H1 (cell line): ENCODE measurements at regions of chr7 and their contacts with region 1.

Region 1: DNA sequence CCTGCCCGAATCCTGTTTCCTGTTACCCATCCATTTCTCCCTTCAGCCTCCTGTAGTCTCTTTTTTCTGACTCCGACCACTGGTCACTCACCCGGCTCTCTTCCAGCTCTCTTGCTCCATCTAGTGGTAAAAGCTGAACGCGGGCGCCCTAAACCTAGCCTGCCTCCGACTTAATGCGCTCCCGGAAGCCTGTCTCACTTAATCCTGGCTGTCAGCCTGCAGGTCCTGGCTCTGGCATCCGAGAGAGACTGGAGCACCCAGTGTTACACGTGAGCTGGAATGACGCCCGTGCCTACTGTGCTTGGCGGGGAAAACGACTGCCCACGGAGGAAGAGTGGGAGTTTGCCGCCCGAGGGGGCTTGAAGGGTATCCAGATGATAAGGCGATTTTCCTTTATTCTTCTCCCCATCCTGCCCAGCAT is 10.3 kb downstream of the SUMF2 start:
- DNase-seq: peak; percentile 66 to 94
- H3K4me3 ChIP-seq: no peak overlapping the region
- H3K27ac ChIP-seq: no peak overlapping the region
- H3K4me1 ChIP-seq: no peaks in the 10 kb centered on the region
- H3K27me3 ChIP-seq: no peaks in the 10 kb centered on the region
- CTCF ChIP-seq: peak; percentile 70 to 86 (median 81)
- EP300 ChIP-seq: no peak
- POLR2A ChIP-seq: no peak
- RAD21 ChIP-seq: peak; percentile 87 to 91

Region 2: GRCh38 chr7:55983537-55983936 is 90.8 kb before region 1 on chr7:
- CTCF ChIA-PET with region 1: no interaction called
- POLR2A ChIA-PET with region 1: no interaction called
- DNase-seq: no peak
- H3K4me3 ChIP-seq: no peak overlapping the region
- H3K27ac ChIP-seq: no peak overlapping the region
- H3K4me1 ChIP-seq: no peaks in the 10 kb centered on the region
- H3K27me3 ChIP-seq: no peaks in the 10 kb centered on the region
- CTCF ChIP-seq: no peak
- EP300 ChIP-seq: no peak
- POLR2A ChIP-seq: no peak
- RAD21 ChIP-seq: no peak

Region 3: DNA sequence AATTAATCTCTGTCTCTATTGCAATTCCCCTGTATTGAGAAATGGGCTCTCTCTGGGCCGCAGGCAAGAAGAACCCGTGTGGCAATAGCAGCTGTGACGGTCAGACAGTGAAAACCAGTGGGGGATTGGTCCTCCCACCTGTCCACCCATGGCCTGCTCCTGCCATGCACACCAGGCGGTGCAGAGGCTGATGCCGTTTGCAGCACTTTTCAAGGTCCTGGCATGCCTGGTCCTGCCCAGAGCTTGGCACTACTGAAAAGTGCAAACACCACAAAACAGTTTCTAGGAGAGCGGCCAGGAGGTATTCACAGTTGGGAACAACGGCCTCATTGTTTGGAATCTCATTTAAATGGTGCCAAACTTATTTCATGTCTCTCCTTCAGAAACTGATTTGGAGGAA is 64.7 kb before region 1 on chr7:
- CTCF ChIA-PET with region 1: interaction called, 28 read pairs
- POLR2A ChIA-PET with region 1: interaction called, 869 read pairs
- DNase-seq: no peak
- H3K4me3 ChIP-seq: no peak overlapping the region
- H3K27ac ChIP-seq: no peak overlapping the region
- H3K4me1 ChIP-seq: no peaks in the 10 kb centered on the region
- H3K27me3 ChIP-seq: no peaks in the 10 kb centered on the region; a peak in 1 of 7 replicates
- CTCF ChIP-seq: no peak
- EP300 ChIP-seq: no peak
- POLR2A ChIP-seq: peak in 1 of 2 experiments; percentile 26; a peak in 1 of 3 replicates
- RAD21 ChIP-seq: no peak

Region 4: DNA sequence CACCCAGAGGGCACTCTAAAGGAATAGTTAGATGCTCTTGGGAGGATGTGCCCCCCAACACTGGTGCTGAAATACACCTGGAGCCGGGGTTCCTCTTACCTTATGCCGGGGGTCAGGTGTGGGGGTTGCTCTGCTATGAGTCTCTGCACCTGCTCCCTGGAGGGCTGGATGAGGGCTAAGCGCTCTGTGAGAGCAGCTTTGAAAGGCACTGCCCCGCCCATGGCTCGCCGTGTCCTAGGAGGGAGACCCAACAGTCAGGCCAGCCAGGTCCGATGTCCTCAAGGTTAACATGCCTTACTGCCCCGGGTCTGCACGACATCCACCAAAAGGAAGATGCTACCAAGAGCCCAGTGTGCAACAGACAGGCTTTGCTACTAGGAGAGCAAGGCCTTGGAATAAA is 54.9 kb before region 1 on chr7:
- CTCF ChIA-PET with region 1: interaction called, 10 read pairs
- POLR2A ChIA-PET with region 1: interaction called, 869 read pairs
- DNase-seq: no peak
- H3K4me3 ChIP-seq: no peak overlapping the region
- H3K27ac ChIP-seq: no peak overlapping the region
- H3K4me1 ChIP-seq: no peaks in the 10 kb centered on the region
- H3K27me3 ChIP-seq: no peaks in the 10 kb centered on the region
- CTCF ChIP-seq: no peak
- EP300 ChIP-seq: no peak
- POLR2A ChIP-seq: no peak
- RAD21 ChIP-seq: no peak

Region 5: GRCh38 chr7:56051339-56052191 is 22.8 kb before region 1 on chr7 and contains the starts of genes CCT6A and PSPH:
- CTCF ChIA-PET with region 1: interaction called, 4 read pairs
- POLR2A ChIA-PET with region 1: interaction called, 14 read pairs
- DNase-seq: peak; percentile 95 to 96
- H3K4me3 ChIP-seq: peak within 1 kb of the TSS; percentile 74 to 100 (median 92)
- H3K27ac ChIP-seq: peak within 1 kb of the TSS; percentile 96
- H3K4me1 ChIP-seq: peaks cover 0 to 11% (median 1%) of the 10 kb centered on the region in 4 experiments; a peak in 6 of 7 replicates
- H3K27me3 ChIP-seq: no peaks in the 10 kb centered on the region
- CTCF ChIP-seq: no peak
- EP300 ChIP-seq: 0 out of 3 replicates have a peak, but pooled peaks of 1 of the 2 experiments have one; percentile 11
- POLR2A ChIP-seq: peak; percentile 85 to 99
- RAD21 ChIP-seq: no peak
- total RNA-seq, gene CCT6A: 260 and 272 TPM in 2 replicates
- total RNA-seq, gene PSPH: 56.3 and 64.8 TPM in 2 replicates

Region 6: DNA sequence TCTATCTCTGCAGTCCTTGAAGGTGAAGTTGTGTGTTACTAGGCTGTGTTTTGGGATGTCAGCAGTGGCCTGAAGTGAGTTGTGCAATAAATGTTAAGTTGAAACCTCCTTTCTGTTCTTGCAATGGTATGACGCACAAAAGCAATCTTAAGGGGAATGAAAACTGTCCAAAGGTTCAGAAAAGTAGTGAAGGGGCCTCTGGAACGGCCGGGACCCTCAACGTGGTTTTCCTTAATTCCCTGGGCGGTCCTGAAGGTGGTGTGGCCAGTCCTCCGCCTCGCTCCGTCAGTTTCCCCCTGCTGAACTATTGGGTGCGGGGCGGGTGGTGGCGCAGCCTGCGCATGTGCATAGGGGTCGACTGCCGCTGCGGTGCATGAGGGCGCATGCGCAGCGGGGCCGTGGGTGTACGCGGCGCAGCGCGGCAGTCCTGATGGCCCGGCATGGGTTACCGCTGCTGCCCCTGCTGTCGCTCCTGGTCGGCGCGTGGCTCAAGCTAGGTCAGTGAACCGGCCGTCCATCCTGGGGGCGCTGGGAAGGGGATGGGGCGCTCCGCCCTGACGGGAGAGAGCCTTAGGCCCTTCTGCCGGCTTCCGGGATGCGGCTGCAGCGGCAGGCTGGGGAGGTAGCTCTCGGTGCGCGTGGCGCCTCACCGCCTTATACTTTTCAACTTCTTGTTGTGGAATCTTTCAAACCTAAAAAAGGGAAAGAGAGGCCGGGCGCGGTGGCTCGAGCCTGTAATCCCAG is 10.3 kb before region 1 on chr7 and contains the start of gene SUMF2:
- CTCF ChIA-PET with region 1: interaction called, 15 read pairs
- POLR2A ChIA-PET with region 1: interaction called, 19 read pairs
- DNase-seq: peak; percentile 89 to 93
- H3K4me3 ChIP-seq: peak within 1 kb of the TSS; percentile 76 to 86 (median 84)
- H3K27ac ChIP-seq: peak within 1 kb of the TSS; percentile 81
- H3K4me1 ChIP-seq: peaks cover 0 to 6% (median 0%) of the 10 kb centered on the region in 4 experiments; a peak in 1 of 7 replicates
- H3K27me3 ChIP-seq: no peaks in the 10 kb centered on the region
- CTCF ChIP-seq: peak in 1 of 3 experiments; percentile 12; a peak in 1 of 4 replicates
- EP300 ChIP-seq: no peak
- POLR2A ChIP-seq: peak; percentile 85 to 90
- RAD21 ChIP-seq: no peak
- total RNA-seq, gene SUMF2: 59.2 and 61.9 TPM in 2 replicates